Activated CD4-positive, alpha-beta T cell treated with anti-CD3 and anti-CD28 coated beads, Interleukin-2, amount 10 ng/mL, durations not matched to agents 24 days and 14 days (primary cell): ENCODE measurements at regions of chr4 and their contacts with region 1.

Region 1: DNA sequence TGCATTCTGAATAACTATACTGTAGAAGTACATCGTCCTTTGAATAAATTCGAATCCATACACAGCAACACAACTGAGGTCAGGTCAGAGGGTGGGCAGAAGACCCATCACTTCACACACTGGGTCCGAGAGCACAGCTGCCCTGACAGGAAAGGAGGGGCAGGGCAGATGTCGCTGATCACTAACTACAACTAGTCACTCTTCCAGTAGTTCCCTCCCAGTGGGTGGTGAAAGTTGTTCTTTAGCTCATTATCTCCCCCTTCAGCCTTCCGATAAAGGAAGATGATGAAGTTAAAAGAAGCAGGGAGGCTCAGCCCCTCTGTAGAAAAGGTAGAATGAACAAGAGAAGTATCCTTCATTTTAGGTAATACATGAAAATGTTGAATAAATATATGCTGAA is 278.9 kb downstream of the INPP4B start:
- DNase-seq: peak; percentile 89
- H3K4me3 Mint-ChIP-seq: peak overlapping the region; percentile 85
- H3K27ac Mint-ChIP-seq: peak overlapping the region; percentile 93
- H3K4me1 Mint-ChIP-seq: peaks cover 43% of the 10 kb centered on the region
- H3K27me3 Mint-ChIP-seq: no peaks in the 10 kb centered on the region

Region 2: DNA sequence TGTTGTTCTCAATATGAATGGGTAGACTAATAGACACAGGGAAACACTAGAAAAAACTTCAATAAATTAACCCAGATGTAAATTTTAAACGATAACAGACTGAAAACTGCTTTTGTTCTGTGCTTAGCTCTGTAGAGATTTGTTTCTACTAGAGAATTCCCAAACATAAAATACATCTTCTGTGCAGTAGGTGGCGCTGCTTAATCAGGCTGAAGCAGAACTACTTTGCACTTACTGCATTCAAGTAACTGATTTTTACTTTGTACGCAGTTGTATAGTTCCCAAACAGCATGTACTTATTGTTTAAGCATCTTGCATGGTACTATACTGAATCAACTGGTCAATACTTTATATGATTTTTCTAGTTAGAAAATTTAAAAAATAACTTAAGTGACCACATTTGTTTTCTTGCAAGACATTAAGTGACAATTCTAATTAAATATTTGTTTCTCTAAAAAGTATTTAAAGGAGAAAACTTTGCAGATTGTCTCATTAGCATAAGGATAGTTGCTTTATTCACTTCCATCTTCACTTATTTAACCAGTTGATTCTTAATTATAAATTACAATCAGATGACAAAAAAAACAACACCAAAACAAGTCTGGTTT is 440.2 kb before region 1 on chr4:
- intact Hi-C with region 1: loop called (anchors 5 kb)
- DNase-seq: peak; percentile 88
- H3K4me3 Mint-ChIP-seq: no peak overlapping the region
- H3K27ac Mint-ChIP-seq: no peak overlapping the region
- H3K4me1 Mint-ChIP-seq: peaks cover 12% of the 10 kb centered on the region
- H3K27me3 Mint-ChIP-seq: no peaks in the 10 kb centered on the region

Region 3: DNA sequence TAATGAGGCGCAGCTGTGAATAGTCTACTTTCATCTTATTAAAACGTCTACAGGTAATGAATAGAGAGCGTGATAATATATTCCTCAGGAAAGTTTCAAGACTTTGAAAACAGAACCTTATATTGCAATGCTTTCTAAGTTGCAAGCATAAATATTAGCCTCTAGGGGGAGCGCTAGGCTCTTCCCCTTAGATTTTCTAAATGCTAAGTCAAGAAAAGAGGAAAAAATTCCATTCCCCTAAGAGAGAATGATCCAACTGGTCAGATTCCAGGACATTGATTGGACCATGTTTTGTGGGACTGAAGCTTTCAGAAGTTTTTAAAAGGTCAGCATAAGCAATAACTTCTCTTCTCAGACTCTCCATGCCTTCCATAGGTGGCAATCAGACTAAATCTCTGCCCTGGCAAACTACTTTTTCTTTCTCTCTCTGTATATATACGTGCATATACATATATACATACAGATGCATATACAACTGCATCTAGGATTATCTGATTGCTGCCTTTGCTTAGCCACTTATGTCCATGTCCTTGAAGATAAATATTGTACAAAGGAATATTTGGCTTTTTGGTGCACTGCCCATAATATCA is 214.0 kb before region 1 on chr4:
- intact Hi-C with region 1: loop called (anchors 1 kb)
- DNase-seq: peak; percentile 73
- H3K4me3 Mint-ChIP-seq: peak overlapping the region; percentile 69
- H3K27ac Mint-ChIP-seq: peak overlapping the region; percentile 71
- H3K4me1 Mint-ChIP-seq: peaks cover 82% of the 10 kb centered on the region
- H3K27me3 Mint-ChIP-seq: no peaks in the 10 kb centered on the region

Region 4: GRCh38 chr4:142416711-142417275 is 150.4 kb before region 1 on chr4:
- intact Hi-C with region 1: loop called (anchors 1 kb)
- DNase-seq: peak; percentile 75
- H3K4me3 Mint-ChIP-seq: peak overlapping the region; percentile 62
- H3K27ac Mint-ChIP-seq: peak overlapping the region; percentile 95
- H3K4me1 Mint-ChIP-seq: peaks cover 36% of the 10 kb centered on the region
- H3K27me3 Mint-ChIP-seq: no peaks in the 10 kb centered on the region

Region 5: DNA sequence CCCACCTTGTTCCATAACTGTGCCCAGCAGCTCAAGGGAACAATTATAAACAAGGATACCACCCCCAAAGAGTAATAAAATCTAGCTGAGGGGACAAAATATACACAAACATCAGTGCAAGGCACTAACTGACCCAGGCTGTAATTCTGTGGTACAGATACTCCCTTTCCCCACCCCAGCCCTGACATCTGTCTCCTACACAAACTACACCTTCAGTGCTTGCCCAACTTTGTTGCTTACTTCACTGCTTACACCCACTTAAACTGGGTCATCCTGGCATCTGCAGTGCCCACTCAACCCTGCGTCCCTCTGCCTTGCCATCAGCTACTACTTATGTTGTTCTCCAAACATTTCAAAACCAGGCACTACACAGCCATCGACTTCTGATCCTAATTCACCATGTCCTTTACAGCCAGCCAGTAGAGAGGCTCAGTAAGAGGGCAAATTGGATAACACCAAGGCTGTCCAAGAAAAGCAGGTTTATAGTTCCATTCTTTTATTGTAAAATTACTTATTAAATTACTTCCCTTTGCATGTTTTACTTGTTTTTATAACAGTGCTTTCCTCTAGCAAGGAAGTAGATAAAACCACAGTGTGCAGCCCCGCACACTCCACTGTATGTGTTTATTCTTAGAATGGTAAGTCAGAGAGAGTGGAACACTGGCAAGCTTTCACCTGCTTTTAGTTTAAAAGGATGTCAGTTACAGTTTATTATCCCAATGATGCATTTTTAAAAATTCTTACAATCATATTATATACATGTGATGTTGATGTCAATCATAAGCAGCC is 129.3 kb after region 1 on chr4:
- intact Hi-C with region 1: loop called (anchors 5 kb)
- DNase-seq: peak; percentile 71
- H3K4me3 Mint-ChIP-seq: peak overlapping the region; percentile 26
- H3K27ac Mint-ChIP-seq: peak overlapping the region; percentile 79
- H3K4me1 Mint-ChIP-seq: peaks cover 48% of the 10 kb centered on the region
- H3K27me3 Mint-ChIP-seq: no peaks in the 10 kb centered on the region

Region 6: DNA sequence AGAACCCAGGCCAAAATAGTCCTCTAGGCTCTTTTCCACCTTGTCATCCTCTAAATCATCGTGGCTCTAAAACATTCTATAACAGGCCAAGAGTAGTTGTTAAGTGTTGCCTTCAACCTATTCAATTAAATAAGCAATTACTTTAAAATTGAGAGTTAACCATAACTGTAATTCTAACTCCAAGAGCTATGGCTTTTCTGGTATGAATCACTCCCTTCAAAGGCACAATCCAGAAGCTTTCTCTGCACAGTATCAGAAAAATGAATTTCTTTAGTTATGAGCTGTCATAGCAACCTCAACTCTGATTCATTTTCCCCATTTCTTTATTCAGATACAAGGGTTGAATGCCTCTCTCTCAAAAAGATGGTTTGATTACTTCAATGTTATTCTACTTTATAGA is 257.2 kb after region 1 on chr4:
- intact Hi-C with region 1: loop called (anchors 5 kb)
- DNase-seq: no peak
- H3K4me3 Mint-ChIP-seq: no peak overlapping the region
- H3K27ac Mint-ChIP-seq: no peak overlapping the region
- H3K4me1 Mint-ChIP-seq: peaks cover 6% of the 10 kb centered on the region
- H3K27me3 Mint-ChIP-seq: no peaks in the 10 kb centered on the region